ENCODE measurements at regions of chr3 and their contacts with region 1.

Region 1: GRCh38 chr3:136196401-136197158 is 445 bp upstream of the MSL2 start:
- DNase-seq: peak; percentile 100
- H3K4me3 ChIP-seq: peak overlapping the region; percentile 80 to 91 (median 83)
- H3K27ac ChIP-seq: peak overlapping the region; percentile 99 to 100 (median 100)
- H3K4me1 ChIP-seq: peaks cover 0 to 32% (median 25%) of the 10 kb centered on the region in 4 donors
- H3K27me3 ChIP-seq: no peaks in the 10 kb centered on the region
- CTCF ChIP-seq: no peak
- EP300 ChIP-seq: peak in 1 of 4 donors; percentile 44
- POLR2A ChIP-seq: peak; percentile 13 to 14

Region 2: GRCh38 chr3:134794950-134795745 is 1401.4 kb before region 1 on chr3 and contains the start of gene EPHB1:
- intact Hi-C with region 1: loop called (anchors 5 kb)
- DNase-seq: peak; percentile 94
- H3K4me3 ChIP-seq: peak within 1 kb of the TSS; percentile 54 to 82 (median 59)
- H3K27ac ChIP-seq: peak within 1 kb of the TSS; percentile 58 to 81 (median 70)
- H3K4me1 ChIP-seq: peaks cover 0 to 54% (median 36%) of the 10 kb centered on the region in 4 donors
- H3K27me3 ChIP-seq: peaks cover 0 to 25% (median 5%) of the 10 kb centered on the region in 3 donors
- CTCF ChIP-seq: peak; percentile 75 to 97 (median 83)
- EP300 ChIP-seq: no peak
- POLR2A ChIP-seq: peak in 1 of 2 donors; percentile 56
- total RNA-seq, gene EPHB1: 2.5 to 17.3 (median 10.0) TPM

Region 3: GRCh38 chr3:135556174-135556573 is 640.4 kb before region 1 on chr3:
- intact Hi-C with region 1: no loop called
- DNase-seq: no peak
- H3K4me3 ChIP-seq: no peak overlapping the region
- H3K27ac ChIP-seq: no peak overlapping the region
- H3K4me1 ChIP-seq: no peaks in the 10 kb centered on the region
- H3K27me3 ChIP-seq: no peaks in the 10 kb centered on the region
- CTCF ChIP-seq: no peak
- EP300 ChIP-seq: no peak
- POLR2A ChIP-seq: no peak

Region 4: GRCh38 chr3:135965506-135966270 is 230.9 kb before region 1 on chr3 and contains the start of gene PPP2R3A:
- intact Hi-C with region 1: loop called (anchors 5 kb)
- DNase-seq: peak; percentile 94
- H3K4me3 ChIP-seq: peak within 1 kb of the TSS; percentile 68 to 81 (median 76)
- H3K27ac ChIP-seq: peak within 1 kb of the TSS; percentile 94 to 97 (median 96)
- H3K4me1 ChIP-seq: peaks cover 0 to 40% (median 37%) of the 10 kb centered on the region in 4 donors
- H3K27me3 ChIP-seq: no peaks in the 10 kb centered on the region
- CTCF ChIP-seq: no peak
- EP300 ChIP-seq: peak in 1 of 4 donors; percentile 18
- POLR2A ChIP-seq: peak; percentile 5 to 38
- total RNA-seq, gene PPP2R3A: 32.9 to 49.0 (median 36.8) TPM

Region 5: GRCh38 chr3:136075218-136075808 is 121.3 kb before region 1 on chr3:
- intact Hi-C with region 1: loop called (anchors 5 kb)
- DNase-seq: peak; percentile 80
- H3K4me3 ChIP-seq: no peak overlapping the region
- H3K27ac ChIP-seq: peak overlapping the region in 2 of 4 donors; percentile 26 to 38
- H3K4me1 ChIP-seq: peaks cover 0 to 26% (median 12%) of the 10 kb centered on the region in 4 donors
- H3K27me3 ChIP-seq: no peaks in the 10 kb centered on the region
- CTCF ChIP-seq: peak; percentile 75 to 93 (median 84)
- EP300 ChIP-seq: no peak
- POLR2A ChIP-seq: no peak

Region 6: GRCh38 chr3:136149667-136150066 is 46.9 kb before region 1 on chr3:
- intact Hi-C with region 1: loop called (anchors 5 kb)
- DNase-seq: no peak
- H3K4me3 ChIP-seq: no peak overlapping the region
- H3K27ac ChIP-seq: peak overlapping the region in 1 of 4 donors; percentile 0
- H3K4me1 ChIP-seq: peaks cover 0 to 35% (median 22%) of the 10 kb centered on the region in 4 donors
- H3K27me3 ChIP-seq: no peaks in the 10 kb centered on the region
- CTCF ChIP-seq: no peak
- EP300 ChIP-seq: no peak
- POLR2A ChIP-seq: no peak

Region 7: DNA sequence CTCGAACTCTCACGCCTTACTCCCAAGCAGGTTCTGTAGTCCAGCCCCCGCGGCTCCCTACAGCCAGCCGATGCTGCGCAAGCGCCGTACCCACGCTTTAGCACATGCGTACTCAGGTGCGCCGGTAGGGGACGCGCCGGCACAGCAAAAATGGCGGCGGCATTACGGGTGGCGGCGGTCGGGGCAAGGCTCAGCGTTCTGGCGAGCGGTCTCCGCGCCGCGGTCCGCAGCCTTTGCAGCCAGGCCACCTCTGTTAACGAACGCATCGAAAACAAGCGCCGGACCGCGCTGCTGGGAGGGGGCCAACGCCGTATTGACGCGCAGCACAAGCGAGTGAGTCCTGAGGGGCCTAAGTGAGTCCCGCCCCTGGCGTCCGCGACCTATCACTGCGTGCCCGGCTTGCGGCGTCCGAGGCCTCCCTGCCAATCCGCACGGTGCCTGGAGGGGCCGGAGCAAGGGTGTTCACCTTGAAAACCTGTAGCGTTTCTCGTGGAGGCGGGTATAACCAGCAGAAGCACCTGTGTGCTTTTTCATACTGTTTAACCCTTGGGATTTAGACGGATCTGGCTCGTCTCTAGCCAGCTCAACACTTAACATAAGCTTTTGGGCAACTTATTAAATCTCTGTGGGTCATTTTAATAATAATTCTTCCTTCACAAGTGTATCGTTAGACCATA is 53.8 kb after region 1 on chr3 and contains the start of gene PCCB:
- intact Hi-C with region 1: loop called (anchors 1 kb)
- DNase-seq: peak; percentile 97
- H3K4me3 ChIP-seq: peak within 1 kb of the TSS; percentile 66 to 72 (median 68)
- H3K27ac ChIP-seq: peak within 1 kb of the TSS; percentile 89 to 93 (median 92)
- H3K4me1 ChIP-seq: peaks cover 0 to 18% (median 15%) of the 10 kb centered on the region in 4 donors
- H3K27me3 ChIP-seq: no peaks in the 10 kb centered on the region
- CTCF ChIP-seq: peak; percentile 80 to 97 (median 96)
- EP300 ChIP-seq: no peak
- POLR2A ChIP-seq: peak; percentile 15 to 23
- total RNA-seq, gene PCCB: 24.8 to 33.9 (median 29.0) TPM